ENCODE measurements at regions of chr18 and their contacts with region 1.

Region 1: GRCh38 chr18:3538456-3538855 is 88.5 kb downstream of the TGIF1 start:
- DNase-seq: no peak
- H3K4me3 ChIP-seq: no peak overlapping the region
- H3K27ac ChIP-seq: peak overlapping the region in 3 of 4 donors; percentile 18 to 47 (median 44)
- H3K4me1 ChIP-seq: peaks cover 5 to 48% (median 16%) of the 10 kb centered on the region in 3 donors
- H3K27me3 ChIP-seq: no peaks in the 10 kb centered on the region
- CTCF ChIP-seq: no peak
- POLR2A ChIP-seq: no peak

Region 2: DNA sequence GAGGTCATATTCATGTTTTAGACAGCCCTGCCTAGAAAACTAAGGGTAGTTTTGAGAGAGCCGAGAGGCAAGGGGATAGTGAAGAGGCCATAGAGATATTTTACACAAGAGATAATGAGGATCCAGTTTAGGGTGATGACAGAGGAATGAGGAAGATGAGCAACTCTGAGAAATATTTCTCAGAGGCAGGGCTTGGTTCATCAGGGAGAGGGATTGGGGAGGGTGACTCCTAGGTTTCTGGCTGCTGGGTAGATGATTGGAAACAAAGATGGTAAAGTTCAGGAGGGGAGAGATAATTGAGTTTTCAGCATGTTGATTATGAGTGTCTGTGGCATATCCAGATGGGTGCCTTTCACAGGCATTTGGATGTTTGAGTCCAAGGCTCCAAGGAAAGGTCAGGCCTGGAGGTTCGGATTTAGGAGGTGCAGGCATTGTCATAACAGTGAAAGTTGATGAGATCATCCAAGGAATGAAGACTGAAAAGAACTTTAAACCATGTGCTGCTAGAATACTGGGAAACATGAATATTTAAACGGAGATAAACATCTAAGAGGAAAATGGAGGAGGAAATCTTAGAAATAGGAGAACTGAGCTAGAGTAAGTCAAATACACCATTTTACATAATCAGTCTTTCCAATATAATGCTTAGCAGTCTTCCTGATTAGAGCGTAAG is 269.1 kb before region 1 on chr18:
- intact Hi-C with region 1: no loop called
- DNase-seq: no peak
- H3K4me3 ChIP-seq: no peak overlapping the region
- H3K27ac ChIP-seq: no peak overlapping the region
- H3K4me1 ChIP-seq: peaks cover 23 to 70% (median 47%) of the 10 kb centered on the region in 3 donors
- H3K27me3 ChIP-seq: no peaks in the 10 kb centered on the region
- CTCF ChIP-seq: no peak
- POLR2A ChIP-seq: no peak

Region 3: GRCh38 chr18:3472681-3473544 is 65.5 kb before region 1 on chr18:
- intact Hi-C with region 1: loop called (anchors 10 kb)
- DNase-seq: no peak
- H3K4me3 ChIP-seq: no peak overlapping the region
- H3K27ac ChIP-seq: no peak overlapping the region
- H3K4me1 ChIP-seq: no peaks in the 10 kb centered on the region
- H3K27me3 ChIP-seq: no peaks in the 10 kb centered on the region
- CTCF ChIP-seq: no peak
- POLR2A ChIP-seq: no peak

Region 4: DNA sequence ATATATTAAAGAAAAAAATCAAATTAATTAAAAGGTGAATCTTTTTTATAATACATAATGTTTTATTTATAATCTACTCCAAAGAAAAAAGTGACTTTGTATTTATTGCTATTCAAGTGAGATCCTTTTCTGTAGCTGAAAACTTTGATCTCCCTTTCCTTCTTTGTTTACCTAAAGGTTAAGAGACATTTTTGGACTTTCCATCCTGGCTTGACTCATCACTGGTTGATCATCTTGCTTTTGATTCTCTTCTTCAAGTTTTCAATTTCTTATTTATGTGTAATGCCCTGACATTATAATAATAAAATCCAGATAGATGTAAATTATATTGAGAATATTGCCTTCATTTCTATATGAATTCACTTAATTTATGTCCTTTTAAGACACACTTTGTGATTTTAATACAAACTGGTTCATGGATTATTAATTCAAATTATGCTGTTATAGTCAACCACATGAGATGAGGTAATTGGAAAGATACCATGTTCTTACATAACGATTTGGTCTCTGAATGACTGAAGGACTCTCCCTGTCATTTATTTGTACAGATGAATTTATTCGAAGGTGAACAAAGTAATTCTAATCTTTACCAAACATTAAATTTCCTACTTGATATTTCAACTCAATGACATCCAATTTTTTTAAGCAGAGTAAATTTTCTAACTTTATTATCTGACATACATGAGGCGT is 95.9 kb after region 1 on chr18:
- intact Hi-C with region 1: no loop called
- DNase-seq: no peak
- H3K4me3 ChIP-seq: no peak overlapping the region
- H3K27ac ChIP-seq: no peak overlapping the region
- H3K4me1 ChIP-seq: no peaks in the 10 kb centered on the region
- H3K27me3 ChIP-seq: no peaks in the 10 kb centered on the region
- CTCF ChIP-seq: no peak
- POLR2A ChIP-seq: no peak